ENCODE measurements at regions of chr17 and their contacts with region 1.

Region 1: DNA sequence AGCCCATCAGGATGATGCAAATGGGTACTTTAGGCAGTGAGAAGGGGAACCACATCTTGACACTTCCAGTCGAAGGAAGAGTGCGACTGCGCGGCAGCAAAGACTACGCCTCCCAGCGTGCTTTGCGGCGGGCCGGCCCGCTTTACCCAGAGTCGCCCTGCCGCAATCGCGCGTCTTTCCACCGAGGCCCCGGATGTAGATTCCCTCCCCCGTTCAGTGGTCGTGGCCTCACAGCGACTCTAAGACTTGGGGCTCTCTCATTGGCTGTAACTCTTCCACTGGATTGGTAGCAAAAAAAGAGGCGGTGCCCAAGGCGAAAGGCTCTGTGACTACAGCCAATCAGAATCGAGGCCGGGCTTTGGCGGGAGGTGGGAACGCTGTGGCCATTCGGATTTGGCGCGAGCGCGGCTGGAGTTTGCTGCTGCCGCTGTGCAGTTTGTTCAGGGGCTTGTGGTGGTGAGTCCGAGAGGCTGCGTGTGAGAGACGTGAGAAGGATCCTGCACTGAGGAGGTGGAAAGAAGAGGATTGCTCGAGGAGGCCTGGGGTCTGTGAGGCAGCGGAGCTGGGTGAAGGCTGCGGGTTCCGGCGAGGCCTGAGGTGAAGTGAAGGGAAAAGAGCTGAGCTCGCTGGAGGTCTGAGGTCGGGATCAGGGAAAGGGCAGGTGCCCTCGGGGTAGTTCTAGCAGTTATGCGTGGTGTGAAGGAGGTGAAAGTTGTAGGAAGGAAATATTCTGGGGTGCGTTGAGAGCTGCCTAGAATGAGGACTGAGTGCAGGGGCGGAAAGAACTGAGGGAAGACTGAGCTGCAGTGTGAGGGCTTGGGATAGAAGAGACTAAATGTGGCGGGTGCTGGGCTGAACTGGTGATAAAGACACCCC is at the start of gene CDC6:
- DNase-seq: peak; percentile 97 to 99 (median 98)
- ATAC-seq: peak; percentile 91
- H3K4me3 ChIP-seq: peak within 1 kb of the TSS; percentile 73 to 84
- H3K4me3 Mint-ChIP-seq: peak within 1 kb of the TSS; percentile 97
- H3K27ac ChIP-seq: peak within 1 kb of the TSS; percentile 21 to 36
- H3K27ac Mint-ChIP-seq: peak within 1 kb of the TSS; percentile 89
- H3K4me1 ChIP-seq: peaks cover 5% of the 10 kb centered on the region
- H3K4me1 Mint-ChIP-seq: peaks cover 22% of the 10 kb centered on the region
- H3K27me3 ChIP-seq: no peaks in the 10 kb centered on the region
- H3K27me3 Mint-ChIP-seq: no peaks in the 10 kb centered on the region
- CTCF ChIP-seq: no peak
- total RNA-seq, gene CDC6: 2.0 to 2.9 TPM

Region 2: DNA sequence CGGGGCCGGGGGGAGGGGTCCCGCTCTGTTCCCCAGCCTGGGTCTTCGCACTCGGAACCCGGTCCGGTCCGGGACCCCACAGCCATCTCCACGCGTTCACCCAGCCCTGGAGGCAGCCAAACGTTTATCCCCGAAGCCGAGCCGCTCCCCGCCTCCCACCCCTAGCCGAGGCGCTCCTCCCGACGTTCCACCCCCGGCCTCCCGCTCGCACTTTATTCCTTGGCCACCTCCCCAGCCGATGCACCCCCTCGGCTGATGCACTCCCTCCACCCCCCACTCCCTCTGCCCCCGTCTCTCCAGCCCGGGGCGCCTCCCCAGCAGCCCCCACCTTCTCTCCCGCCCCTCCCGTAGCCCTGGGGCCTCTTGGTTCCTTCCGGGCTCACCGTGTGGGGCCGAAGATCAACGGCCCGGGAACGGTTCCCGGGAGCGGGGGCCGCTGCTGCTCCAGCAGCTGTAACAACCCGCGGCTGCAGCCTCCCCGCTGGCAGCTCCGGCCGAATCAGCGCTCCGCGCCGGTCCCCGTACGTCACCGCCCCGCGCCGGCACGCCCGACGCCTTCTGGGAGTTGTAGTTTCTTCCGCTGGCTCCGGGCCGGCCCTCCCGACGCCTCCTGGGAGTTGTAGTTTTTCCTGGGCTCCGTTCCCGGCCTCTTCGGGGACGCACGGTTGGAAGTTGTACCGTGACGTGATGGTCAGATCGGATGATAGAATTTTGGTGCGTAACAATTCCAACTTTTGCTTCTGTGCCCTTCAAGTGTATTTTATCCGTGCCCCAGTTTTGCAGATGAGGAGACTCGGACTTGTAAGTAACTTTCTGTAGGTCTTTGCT is 360.4 kb before region 1 on chr17 and contains the starts of genes LRRC3C and ORMDL3:
- CTCF ChIA-PET with region 1: no interaction called
- POLR2A ChIA-PET with region 1: no interaction called
- intact Hi-C with region 1: loop called in 1 of 2 experiments (anchors 2 kb)
- DNase-seq: peak; percentile 80 to 96 (median 91)
- ATAC-seq: peak; percentile 70
- H3K4me3 ChIP-seq: peak within 1 kb of the TSS; percentile 87 to 90
- H3K4me3 Mint-ChIP-seq: peak within 1 kb of the TSS; percentile 96
- H3K27ac ChIP-seq: peak within 1 kb of the TSS; percentile 70 to 71
- H3K27ac Mint-ChIP-seq: peak within 1 kb of the TSS; percentile 91
- H3K4me1 ChIP-seq: peaks cover 50% of the 10 kb centered on the region
- H3K4me1 Mint-ChIP-seq: peaks cover 42% of the 10 kb centered on the region
- H3K27me3 ChIP-seq: no peaks in the 10 kb centered on the region
- H3K27me3 Mint-ChIP-seq: no peaks in the 10 kb centered on the region
- CTCF ChIP-seq: no peak
- total RNA-seq, gene LRRC3C: not detected
- total RNA-seq, gene ORMDL3: 136 to 140 TPM

Region 3: GRCh38 chr17:40139566-40140058 is 148.1 kb before region 1 on chr17:
- CTCF ChIA-PET with region 1: no interaction called
- POLR2A ChIA-PET with region 1: no interaction called
- intact Hi-C with region 1: loop called (anchors 1 kb)
- DNase-seq: peak in 2 of 9 experiments; percentile 3 to 24
- ATAC-seq: peak; percentile 24
- H3K4me3 ChIP-seq: peak overlapping the region; percentile 57 to 71
- H3K4me3 Mint-ChIP-seq: peak overlapping the region; percentile 89
- H3K27ac ChIP-seq: peak overlapping the region; percentile 93 to 94
- H3K27ac Mint-ChIP-seq: peak overlapping the region; percentile 99
- H3K4me1 ChIP-seq: peaks cover 24% of the 10 kb centered on the region
- H3K4me1 Mint-ChIP-seq: peaks cover 42% of the 10 kb centered on the region
- H3K27me3 ChIP-seq: no peaks in the 10 kb centered on the region
- H3K27me3 Mint-ChIP-seq: no peaks in the 10 kb centered on the region
- CTCF ChIP-seq: no peak

Region 4: DNA sequence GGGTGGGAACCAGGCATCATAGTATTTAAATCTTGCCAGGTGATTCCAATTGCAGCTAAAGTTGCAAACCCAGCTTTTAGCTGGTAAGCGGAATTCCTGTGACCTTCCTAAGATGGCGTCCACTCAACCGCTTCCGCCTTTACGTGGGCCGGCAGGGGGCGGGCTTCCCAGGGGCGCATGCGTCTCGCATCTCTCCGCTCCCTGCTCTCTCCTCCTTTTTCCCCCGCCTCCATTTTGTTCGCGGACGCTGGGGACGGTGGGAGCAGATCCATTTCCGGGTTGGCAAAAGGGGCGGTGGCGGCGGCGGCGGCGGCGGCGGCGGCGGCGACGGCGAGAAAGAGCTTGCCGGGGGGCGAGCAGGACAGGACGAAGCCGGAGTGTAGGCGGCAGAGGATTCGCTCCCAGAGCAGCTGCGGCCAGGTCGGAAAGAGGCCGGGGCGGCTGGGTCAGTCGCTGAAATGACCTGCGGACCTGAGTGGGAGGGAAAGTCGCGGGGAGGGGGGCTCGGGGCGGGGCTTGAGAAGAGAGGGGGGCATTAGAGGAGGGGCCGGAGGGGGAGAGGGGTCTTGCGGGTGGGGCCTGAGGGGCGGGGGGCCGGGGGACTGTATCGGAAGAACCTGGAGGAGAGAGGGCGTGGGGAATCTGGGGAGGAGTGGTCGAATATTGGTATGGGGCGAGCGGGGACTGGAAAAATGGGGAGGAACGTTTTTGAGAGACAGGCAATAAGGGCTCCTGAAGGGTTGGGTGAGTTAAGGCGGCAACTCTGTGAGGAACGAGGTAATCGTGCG is 68.5 kb before region 1 on chr17 and contains the start of gene WIPF2:
- CTCF ChIA-PET with region 1: interaction called, 3 read pairs
- POLR2A ChIA-PET with region 1: interaction called, 3 read pairs
- intact Hi-C with region 1: loop called (anchors 1 kb)
- DNase-seq: peak; percentile 92 to 98 (median 96)
- ATAC-seq: peak; percentile 90
- H3K4me3 ChIP-seq: peak within 1 kb of the TSS; percentile 83 to 87
- H3K4me3 Mint-ChIP-seq: peak within 1 kb of the TSS; percentile 95
- H3K27ac ChIP-seq: peak within 1 kb of the TSS; percentile 99
- H3K27ac Mint-ChIP-seq: peak within 1 kb of the TSS; percentile 100
- H3K4me1 ChIP-seq: peaks cover 8% of the 10 kb centered on the region
- H3K4me1 Mint-ChIP-seq: peaks cover 30% of the 10 kb centered on the region
- H3K27me3 ChIP-seq: no peaks in the 10 kb centered on the region
- H3K27me3 Mint-ChIP-seq: no peaks in the 10 kb centered on the region
- CTCF ChIP-seq: peak; percentile 53
- total RNA-seq, gene WIPF2: 26.8 to 30.8 TPM

Region 5: DNA sequence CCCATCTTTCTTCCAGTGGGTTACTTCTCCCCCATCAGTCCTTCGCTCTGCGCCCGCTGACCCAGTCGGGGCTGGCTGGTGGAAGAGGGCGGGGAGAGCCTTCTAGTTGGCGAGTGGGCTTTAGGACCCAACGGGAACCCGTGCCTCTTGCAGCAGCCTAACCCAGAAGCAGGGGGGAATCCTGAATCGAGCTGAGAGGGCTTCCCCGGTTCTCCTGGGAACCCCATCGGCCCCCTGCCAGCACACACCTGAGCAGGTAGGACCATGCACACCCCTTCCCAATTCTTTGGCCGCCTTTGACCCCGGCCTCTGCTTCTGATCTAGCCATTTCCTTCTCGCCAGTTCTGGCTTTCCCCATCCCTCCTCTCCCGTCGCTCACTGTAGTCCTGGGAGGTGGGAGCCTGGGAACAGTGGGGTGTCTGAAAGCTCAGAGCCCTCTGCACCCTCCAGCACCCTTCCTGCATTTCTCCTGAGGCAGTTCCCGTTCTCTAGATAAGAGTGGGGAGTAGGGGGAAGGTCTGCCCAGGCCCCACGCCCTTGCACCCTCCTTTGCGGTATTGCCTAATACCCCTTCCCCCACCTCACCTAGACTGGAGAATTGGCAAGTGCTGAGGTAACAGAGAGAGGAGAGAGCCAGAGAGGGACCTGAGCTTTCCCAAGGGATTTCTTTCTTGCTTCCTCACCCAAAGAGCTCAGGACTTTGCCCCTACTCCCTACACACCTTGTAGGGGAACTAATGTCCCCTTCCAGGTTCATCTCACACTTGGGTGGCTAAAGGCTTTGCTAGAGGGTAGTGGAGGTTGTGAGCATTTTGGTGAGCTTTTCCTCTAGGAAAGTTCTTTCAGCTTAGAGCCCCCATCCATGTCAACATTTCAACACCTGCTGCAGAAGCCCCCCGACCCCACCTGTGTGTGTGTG is 21.6 kb after region 1 on chr17 and contains the start of gene RARA:
- CTCF ChIA-PET with region 1: interaction called, 31 read pairs
- POLR2A ChIA-PET with region 1: no interaction called
- intact Hi-C with region 1: no loop called
- DNase-seq: peak in 5 of 9 experiments; percentile 45 to 73 (median 55)
- ATAC-seq: peak; percentile 50
- H3K4me3 ChIP-seq: peak within 1 kb of the TSS; percentile 49 to 58
- H3K4me3 Mint-ChIP-seq: no peak within 1 kb of the TSS
- H3K27ac ChIP-seq: peak within 1 kb of the TSS in 1 of 2 experiments; percentile 21
- H3K27ac Mint-ChIP-seq: peak within 1 kb of the TSS; percentile 60
- H3K4me1 ChIP-seq: peaks cover 73% of the 10 kb centered on the region
- H3K4me1 Mint-ChIP-seq: peaks cover 15% of the 10 kb centered on the region
- H3K27me3 ChIP-seq: no peaks in the 10 kb centered on the region
- H3K27me3 Mint-ChIP-seq: no peaks in the 10 kb centered on the region
- CTCF ChIP-seq: no peak
- total RNA-seq, gene RARA: 133 TPM

Region 6: GRCh38 chr17:41678907-41679739 is 1391.4 kb after region 1 on chr17:
- CTCF ChIA-PET with region 1: no interaction called
- POLR2A ChIA-PET with region 1: no interaction called
- intact Hi-C with region 1: loop called in 1 of 2 experiments (anchors 5 kb)
- DNase-seq: peak; percentile 15 to 89 (median 60)
- ATAC-seq: peak; percentile 88
- H3K4me3 ChIP-seq: peak overlapping the region; percentile 34 to 52
- H3K4me3 Mint-ChIP-seq: peak overlapping the region; percentile 86
- H3K27ac ChIP-seq: peak overlapping the region; percentile 64 to 74
- H3K27ac Mint-ChIP-seq: peak overlapping the region; percentile 97
- H3K4me1 ChIP-seq: peaks cover 14% of the 10 kb centered on the region
- H3K4me1 Mint-ChIP-seq: peaks cover 24% of the 10 kb centered on the region
- H3K27me3 ChIP-seq: no peaks in the 10 kb centered on the region
- H3K27me3 Mint-ChIP-seq: no peaks in the 10 kb centered on the region
- CTCF ChIP-seq: no peak

Measured in CD8-positive, alpha-beta T cell (primary cell).